ENCODE measurements at regions of chr14 and their contacts with region 1.

Region 1: DNA sequence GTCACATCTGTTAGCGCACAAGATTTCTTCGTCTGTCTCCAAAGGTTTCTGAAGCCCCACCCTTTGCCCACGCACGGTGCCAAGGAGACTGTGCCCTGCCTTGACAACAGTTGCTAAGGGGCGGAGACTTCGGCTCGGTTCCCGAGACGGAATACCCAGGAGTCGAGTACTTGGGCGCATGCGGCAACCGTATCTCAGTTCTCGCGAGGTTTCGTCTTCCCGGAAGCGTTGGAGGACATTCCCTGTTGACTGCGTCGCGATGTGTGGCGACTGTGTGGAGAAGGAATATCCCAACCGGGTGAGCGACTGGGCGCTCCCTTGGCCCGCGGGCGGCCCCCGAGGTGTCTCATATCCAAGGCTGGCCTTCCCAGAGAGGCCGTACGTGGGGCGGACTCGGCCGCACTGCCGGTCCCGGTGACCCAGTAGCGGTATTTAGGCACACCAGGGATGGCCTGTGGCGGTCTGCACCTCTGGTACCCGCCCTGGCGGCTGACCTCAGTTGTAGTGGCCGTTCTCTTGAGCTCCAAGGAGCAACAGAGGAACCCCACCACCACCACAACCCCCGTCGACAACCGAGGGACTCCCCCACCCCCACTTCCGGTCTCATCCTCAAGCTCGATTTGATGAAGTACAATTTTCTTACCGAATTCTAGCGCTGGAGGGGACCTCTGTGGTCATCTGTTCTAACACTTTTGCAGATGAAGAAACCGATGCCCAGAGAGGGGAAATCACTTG is at the start of gene CHURC1:
- DNase-seq: peak; percentile 98
- H3K4me3 ChIP-seq: peak within 1 kb of the TSS; percentile 80 to 96 (median 94)
- H3K27ac ChIP-seq: peak within 1 kb of the TSS; percentile 81
- H3K4me1 ChIP-seq: peaks cover 16% of the 10 kb centered on the region
- H3K27me3 ChIP-seq: peaks cover 8 to 13% of the 10 kb centered on the region in 2 experiments
- CTCF ChIP-seq: no peak
- POLR2A ChIP-seq: peak; percentile 95
- total RNA-seq, gene CHURC1: 44.0 and 44.4 TPM in 2 replicates

Region 2: DNA sequence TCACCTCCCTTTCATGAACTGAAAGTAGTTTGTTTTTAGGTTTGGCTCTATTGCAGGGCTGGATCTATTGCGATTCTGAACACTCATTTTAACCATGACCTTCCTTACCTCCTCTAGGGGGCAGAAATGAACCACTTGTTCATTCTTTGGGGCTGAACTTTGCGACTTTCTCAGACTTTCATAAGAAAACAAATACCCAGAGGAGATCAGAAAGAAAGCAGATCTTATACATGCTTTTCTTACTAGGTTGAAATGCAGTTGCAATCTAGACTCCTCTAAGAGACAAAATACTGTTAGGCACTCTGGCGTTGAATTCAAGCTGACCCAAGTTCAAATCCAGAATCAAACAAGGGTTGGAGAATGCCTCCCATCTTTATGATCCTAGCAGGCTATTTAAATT is 242.8 kb before region 1 on chr14:
- CTCF ChIA-PET with region 1: interaction called, 16 read pairs
- POLR2A ChIA-PET with region 1: no interaction called
- dilution Hi-C with region 1: no loop called
- intact Hi-C with region 1: no loop called
- DNase-seq: peak; percentile 59
- H3K4me3 ChIP-seq: no peak overlapping the region
- H3K27ac ChIP-seq: no peak overlapping the region
- H3K4me1 ChIP-seq: no peaks in the 10 kb centered on the region
- H3K27me3 ChIP-seq: peaks cover 5 to 10% of the 10 kb centered on the region in 2 experiments
- CTCF ChIP-seq: peak; percentile 40 to 66
- POLR2A ChIP-seq: no peak

Region 3: GRCh38 chr14:64800000-64800399 is 114.4 kb before region 1 on chr14:
- CTCF ChIA-PET with region 1: interaction called, 10 read pairs
- POLR2A ChIA-PET with region 1: no interaction called
- dilution Hi-C with region 1: no loop called
- intact Hi-C with region 1: no loop called
- DNase-seq: peak; percentile 38
- H3K4me3 ChIP-seq: no peak overlapping the region
- H3K27ac ChIP-seq: no peak overlapping the region
- H3K4me1 ChIP-seq: no peaks in the 10 kb centered on the region
- H3K27me3 ChIP-seq: peaks cover 0 to 4% of the 10 kb centered on the region in 2 experiments
- CTCF ChIP-seq: peak; percentile 47 to 61
- POLR2A ChIP-seq: no peak

Region 4: GRCh38 chr14:64823305-64823861 is 91.0 kb before region 1 on chr14:
- CTCF ChIA-PET with region 1: interaction called, 50 read pairs
- POLR2A ChIA-PET with region 1: no interaction called
- dilution Hi-C with region 1: no loop called
- intact Hi-C with region 1: loop called (anchors 5 kb)
- DNase-seq: peak; percentile 36
- H3K4me3 ChIP-seq: no peak overlapping the region
- H3K27ac ChIP-seq: no peak overlapping the region
- H3K4me1 ChIP-seq: no peaks in the 10 kb centered on the region
- H3K27me3 ChIP-seq: peaks cover 8 to 19% of the 10 kb centered on the region in 2 experiments
- CTCF ChIP-seq: peak; percentile 70 to 83
- POLR2A ChIP-seq: no peak

Region 5: GRCh38 chr14:64899958-64900357 is 14.4 kb before region 1 on chr14:
- CTCF ChIA-PET with region 1: interaction called, 26 read pairs
- POLR2A ChIA-PET with region 1: no interaction called
- dilution Hi-C with region 1: no loop called
- intact Hi-C with region 1: no loop called
- DNase-seq: no peak
- H3K4me3 ChIP-seq: no peak overlapping the region
- H3K27ac ChIP-seq: no peak overlapping the region
- H3K4me1 ChIP-seq: no peaks in the 10 kb centered on the region
- H3K27me3 ChIP-seq: peaks cover 19 to 21% of the 10 kb centered on the region in 2 experiments
- CTCF ChIP-seq: no peak
- POLR2A ChIP-seq: no peak

Region 6: DNA sequence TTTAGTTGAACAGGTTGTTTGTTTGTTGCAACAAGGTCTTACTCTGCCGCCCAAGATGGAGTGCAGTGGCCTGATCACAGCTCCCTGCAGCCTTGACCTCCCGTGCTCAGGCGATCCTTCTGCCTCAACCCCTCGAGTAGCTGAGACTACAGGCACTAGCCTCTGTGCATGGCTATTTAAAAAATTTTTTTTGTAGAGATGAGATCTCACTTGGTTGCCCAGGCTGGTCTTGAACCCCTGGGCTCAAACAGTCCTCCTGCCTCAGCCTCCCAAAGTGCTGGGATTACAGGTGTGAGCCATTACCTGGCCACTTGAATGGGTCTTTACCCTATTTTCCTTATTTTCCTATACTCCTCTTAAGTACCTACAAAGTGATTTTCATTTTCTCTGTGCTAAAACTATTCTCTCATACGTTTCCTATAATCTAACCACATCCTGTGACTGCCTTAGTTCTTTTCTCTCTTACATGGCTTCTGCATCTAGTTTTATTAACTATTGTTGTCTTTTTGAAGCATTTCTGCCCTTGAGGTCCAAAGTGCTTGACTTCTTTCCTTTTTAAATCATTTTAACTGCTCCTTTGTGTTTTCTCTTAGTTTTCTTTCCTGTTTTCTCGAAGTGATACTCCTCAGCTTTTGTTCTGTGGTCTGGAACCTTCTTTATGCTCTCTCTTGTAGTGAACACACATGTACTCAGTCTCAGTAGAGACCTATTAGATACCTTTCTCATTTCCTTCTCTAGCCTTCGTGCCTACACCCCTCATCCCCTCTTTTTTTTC is 14.0 kb after region 1 on chr14:
- CTCF ChIA-PET with region 1: interaction called, 13 read pairs
- POLR2A ChIA-PET with region 1: interaction called, 4 read pairs
- dilution Hi-C with region 1: no loop called
- intact Hi-C with region 1: no loop called
- DNase-seq: peak; percentile 60
- H3K4me3 ChIP-seq: no peak overlapping the region
- H3K27ac ChIP-seq: no peak overlapping the region
- H3K4me1 ChIP-seq: no peaks in the 10 kb centered on the region
- H3K27me3 ChIP-seq: no peaks in the 10 kb centered on the region
- CTCF ChIP-seq: no peak
- POLR2A ChIP-seq: no peak

Measured in endothelial cell of umbilical vein (primary cell).